ENCODE measurements at regions of chr1 and their contacts with region 1.

Region 1: DNA sequence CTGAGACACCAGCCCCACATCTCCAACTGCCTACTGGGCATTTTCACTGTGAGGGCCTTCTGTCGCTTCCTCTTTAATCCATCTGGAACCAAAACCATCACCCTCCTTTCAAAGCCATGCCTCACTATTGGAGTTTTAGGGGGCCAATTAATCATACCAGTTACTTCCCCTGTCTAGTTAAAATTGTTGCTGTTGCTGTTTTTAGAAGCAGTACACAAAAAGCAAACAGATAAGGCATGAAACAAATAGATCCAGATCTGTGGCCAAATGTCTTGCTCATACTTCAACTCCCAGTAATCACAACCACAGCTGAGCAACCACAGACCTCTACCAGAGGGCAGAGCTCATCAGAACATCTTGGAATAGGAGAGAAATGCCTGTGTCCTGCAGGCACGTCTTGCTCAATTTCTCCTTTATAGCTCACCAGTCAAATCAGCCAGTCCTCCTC is 133.8 kb upstream of the C1orf105 start:
- DNase-seq: no peak
- H3K4me3 Mint-ChIP-seq: no peak overlapping the region
- H3K27ac Mint-ChIP-seq: no peak overlapping the region
- H3K4me1 Mint-ChIP-seq: peaks cover 8% of the 10 kb centered on the region
- H3K27me3 Mint-ChIP-seq: peaks cover 1% of the 10 kb centered on the region

Region 2: DNA sequence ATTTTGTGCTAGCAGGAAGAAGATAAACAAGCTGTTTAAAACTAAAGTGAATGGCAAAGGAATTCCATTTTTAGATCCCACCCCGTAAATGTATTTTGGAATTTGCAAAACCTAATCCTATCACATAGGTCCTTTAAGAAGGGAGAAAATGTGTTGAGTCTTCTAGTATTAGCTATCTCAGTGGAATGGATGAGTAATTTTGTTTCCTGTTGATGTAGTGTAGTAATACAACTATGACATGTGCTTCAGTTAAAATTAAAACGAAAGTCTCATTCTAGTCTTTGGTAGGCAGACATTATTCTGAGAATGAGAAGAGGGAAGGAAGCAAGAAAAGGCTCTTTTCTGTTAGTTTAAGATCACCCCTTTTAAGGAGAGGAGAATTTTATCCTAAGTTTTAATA is 132.1 kb before region 1 on chr1:
- intact Hi-C with region 1: no loop called
- DNase-seq: no peak
- H3K4me3 Mint-ChIP-seq: peak overlapping the region; percentile 52
- H3K27ac Mint-ChIP-seq: peak overlapping the region; percentile 88
- H3K4me1 Mint-ChIP-seq: peaks cover 15% of the 10 kb centered on the region
- H3K27me3 Mint-ChIP-seq: no peaks in the 10 kb centered on the region

Region 3: GRCh38 chr1:172298146-172298545 is 11.5 kb after region 1 on chr1:
- intact Hi-C with region 1: loop called (anchors 1 kb)
- DNase-seq: no peak
- H3K4me3 Mint-ChIP-seq: no peak overlapping the region
- H3K27ac Mint-ChIP-seq: no peak overlapping the region
- H3K4me1 Mint-ChIP-seq: no peaks in the 10 kb centered on the region
- H3K27me3 Mint-ChIP-seq: no peaks in the 10 kb centered on the region

Measured in activated T-helper 2 cell treated with anti-CD3 and anti-CD28 coated beads, Interferon-gamma antibody, Interleukin-2, Interleukin-4, amounts not matched to agents 10 μg/mL and 5 μg/mL and 100 μg/mL, durations not matched to agents 14 hours and 24 hours and 36 hours (primary cell).